ENCODE measurements at regions of chr17 and their contacts with region 1.

Region 1: DNA sequence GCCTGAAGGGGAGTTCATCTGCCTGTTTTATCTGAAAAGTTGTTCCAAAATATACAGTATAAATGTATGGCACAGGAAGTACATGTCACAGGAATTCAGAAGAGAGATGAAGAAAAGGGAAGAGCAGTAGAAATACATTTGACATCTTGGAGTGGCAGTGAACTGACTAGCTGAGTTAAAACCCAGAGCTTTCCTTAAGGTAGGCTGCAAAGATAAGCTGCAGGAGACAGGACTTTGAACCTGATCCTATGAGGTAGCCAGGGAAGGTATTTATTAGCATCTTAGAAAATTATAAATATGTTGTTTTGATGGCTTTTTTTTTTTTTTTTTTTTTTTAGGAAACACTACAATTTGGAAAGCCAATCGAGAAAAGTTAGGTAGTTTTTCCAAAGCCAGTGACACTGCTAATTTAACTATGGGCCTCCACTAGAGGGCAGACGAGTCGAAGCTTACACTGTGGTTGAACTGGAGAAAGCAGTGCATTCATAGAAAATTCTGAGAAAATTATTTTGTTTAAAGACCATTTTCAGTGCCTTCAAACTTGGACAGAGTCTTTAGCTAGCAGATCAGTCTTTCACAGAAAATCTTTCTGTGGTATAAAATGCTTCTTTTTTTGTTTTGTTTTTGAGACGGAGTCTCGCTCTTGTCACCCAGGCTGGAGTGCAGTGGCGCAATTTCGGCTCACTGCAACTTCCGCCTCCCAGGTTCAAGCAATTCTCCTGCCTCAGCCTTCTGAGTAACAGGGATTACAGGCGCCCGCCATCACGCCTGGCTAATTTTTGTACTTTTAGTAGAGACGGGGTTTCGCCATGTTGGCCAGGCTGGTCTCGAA is 122.3 kb downstream of the SSH2 start:
- DNase-seq: peak; percentile 42 to 56
- ATAC-seq: peak; percentile 73 to 87 (median 76)
- H3K4me3 ChIP-seq: no peak overlapping the region
- H3K27ac ChIP-seq: no peak overlapping the region
- H3K4me1 ChIP-seq: no peaks in the 10 kb centered on the region
- H3K27me3 ChIP-seq: no peaks in the 10 kb centered on the region
- CTCF ChIP-seq: peak; percentile 80

Region 2: DNA sequence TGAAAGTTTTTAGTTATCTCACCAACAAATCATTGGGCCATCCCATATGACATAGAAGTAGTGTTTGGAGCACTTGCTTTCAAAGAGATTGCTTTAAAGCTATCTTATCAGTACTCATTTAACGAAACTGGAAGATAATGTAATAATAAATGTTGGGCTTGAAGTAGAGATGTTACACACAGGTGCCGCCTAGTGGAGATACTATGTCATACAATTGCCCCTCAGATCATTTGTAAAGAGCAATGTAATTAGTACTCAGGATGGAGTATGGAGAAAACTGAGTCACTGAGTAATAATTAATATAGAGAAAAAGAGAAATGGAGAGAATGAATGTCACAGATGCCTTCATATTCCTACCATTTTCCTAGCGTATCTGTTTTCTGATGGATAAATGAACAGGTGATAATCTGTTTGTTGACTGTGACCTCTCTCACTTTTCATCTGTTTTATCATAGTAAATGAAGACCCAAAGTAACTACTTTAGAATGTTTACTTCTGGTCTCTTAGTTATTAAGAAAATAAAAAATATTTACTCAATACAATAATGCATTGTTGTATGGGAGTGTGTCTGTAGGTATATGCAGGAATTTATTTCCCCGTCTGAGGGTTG is 214.1 kb after region 1 on chr17:
- intact Hi-C with region 1: loop called in 1 of 2 experiments (anchors 5 kb)
- DNase-seq: no peak
- ATAC-seq: peak in 2 of 4 donors; percentile 54 to 55
- H3K4me3 ChIP-seq: no peak overlapping the region
- H3K27ac ChIP-seq: no peak overlapping the region
- H3K4me1 ChIP-seq: no peaks in the 10 kb centered on the region
- H3K27me3 ChIP-seq: no peaks in the 10 kb centered on the region
- CTCF ChIP-seq: peak; percentile 75

Measured in psoas muscle (tissue), 8 donors.